Gastrocnemius medialis (tissue), 4 donors: ENCODE measurements at regions of chr1 and their contacts with region 1.

Region 1: GRCh38 chr1:207040181-207040533 is 7.6 kb upstream of the C1orf116 start:
- DNase-seq: no peak
- ATAC-seq: no peak
- H3K4me3 ChIP-seq: no peak overlapping the region
- H3K27ac ChIP-seq: no peak overlapping the region
- H3K4me1 ChIP-seq: peaks cover 2 to 9% of the 10 kb centered on the region in 2 donors
- H3K27me3 ChIP-seq: no peaks in the 10 kb centered on the region
- CTCF ChIP-seq: no peak
- POLR2A ChIP-seq: no peak

Region 2: GRCh38 chr1:205042911-205043806 is 1997.0 kb before region 1 on chr1 and contains the start of gene CNTN2:
- in situ Hi-C with region 1: no loop called
- intact Hi-C with region 1: no loop called
- DNase-seq: no peak
- ATAC-seq: no peak
- H3K4me3 ChIP-seq: no peak within 1 kb of the TSS
- H3K27ac ChIP-seq: no peak within 1 kb of the TSS
- H3K4me1 ChIP-seq: no peaks in the 10 kb centered on the region
- H3K27me3 ChIP-seq: peaks cover 37 to 53% (median 45%) of the 10 kb centered on the region in 3 donors
- CTCF ChIP-seq: no peak
- POLR2A ChIP-seq: no peak
- total RNA-seq, gene CNTN2: not detected

Region 3: DNA sequence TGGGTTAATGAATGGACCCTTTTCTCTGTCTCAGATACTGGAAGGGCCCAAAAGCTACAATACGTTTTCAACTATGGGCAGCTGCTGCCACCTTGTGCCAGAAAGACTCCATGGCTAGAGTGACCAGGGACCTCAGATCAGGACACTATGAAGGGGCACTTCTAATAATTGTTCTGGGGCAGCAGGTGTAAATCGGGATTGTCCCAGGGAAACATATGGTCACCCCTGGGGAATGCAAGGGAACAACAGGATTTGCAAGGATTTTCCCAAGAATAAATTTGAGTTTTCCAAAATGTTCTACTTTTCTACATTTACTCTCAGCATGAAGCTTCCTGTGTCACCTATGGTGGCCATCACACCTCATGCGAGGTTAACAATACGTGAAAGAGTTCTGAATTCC is 57.9 kb before region 1 on chr1:
- in situ Hi-C with region 1: no loop called
- intact Hi-C with region 1: no loop called
- DNase-seq: peak; percentile 11 to 19
- ATAC-seq: peak; percentile 46 to 52
- H3K4me3 ChIP-seq: no peak overlapping the region
- H3K27ac ChIP-seq: no peak overlapping the region
- H3K4me1 ChIP-seq: no peaks in the 10 kb centered on the region
- H3K27me3 ChIP-seq: no peaks in the 10 kb centered on the region
- CTCF ChIP-seq: peak in 3 of 5 experiments; percentile 42 to 52 (median 44)
- POLR2A ChIP-seq: no peak

Region 4: GRCh38 chr1:207077470-207078377 is 37.6 kb after region 1 on chr1:
- in situ Hi-C with region 1: loop called in 2 of 4 experiments (anchors 5 kb)
- intact Hi-C with region 1: loop called (anchors 10 kb)
- DNase-seq: peak; percentile 46 to 62
- ATAC-seq: peak; percentile 88 to 91
- H3K4me3 ChIP-seq: no peak overlapping the region
- H3K27ac ChIP-seq: peak overlapping the region; percentile 4 to 72 (median 36)
- H3K4me1 ChIP-seq: peaks cover 16 to 20% of the 10 kb centered on the region in 2 donors
- H3K27me3 ChIP-seq: no peaks in the 10 kb centered on the region
- CTCF ChIP-seq: peak; percentile 78 to 94 (median 85)
- POLR2A ChIP-seq: no peak